Uterus (tissue), 4 donors: ENCODE measurements at regions of chr3 and their contacts with region 1.

Region 1: GRCh38 chr3:64030741-64031140 is 7.4 kb upstream of the PSMD6 start:
- DNase-seq: peak; percentile 77 to 79
- H3K4me3 ChIP-seq: peak overlapping the region in 1 of 2 donors; percentile 23
- H3K27ac ChIP-seq: peak overlapping the region; percentile 65 to 74
- H3K4me1 ChIP-seq: peaks cover 0 to 6% of the 10 kb centered on the region in 2 donors
- H3K27me3 ChIP-seq: no peaks in the 10 kb centered on the region
- CTCF ChIP-seq: peak; percentile 92 to 96 (median 94)
- POLR2A ChIP-seq: no peak

Region 2: DNA sequence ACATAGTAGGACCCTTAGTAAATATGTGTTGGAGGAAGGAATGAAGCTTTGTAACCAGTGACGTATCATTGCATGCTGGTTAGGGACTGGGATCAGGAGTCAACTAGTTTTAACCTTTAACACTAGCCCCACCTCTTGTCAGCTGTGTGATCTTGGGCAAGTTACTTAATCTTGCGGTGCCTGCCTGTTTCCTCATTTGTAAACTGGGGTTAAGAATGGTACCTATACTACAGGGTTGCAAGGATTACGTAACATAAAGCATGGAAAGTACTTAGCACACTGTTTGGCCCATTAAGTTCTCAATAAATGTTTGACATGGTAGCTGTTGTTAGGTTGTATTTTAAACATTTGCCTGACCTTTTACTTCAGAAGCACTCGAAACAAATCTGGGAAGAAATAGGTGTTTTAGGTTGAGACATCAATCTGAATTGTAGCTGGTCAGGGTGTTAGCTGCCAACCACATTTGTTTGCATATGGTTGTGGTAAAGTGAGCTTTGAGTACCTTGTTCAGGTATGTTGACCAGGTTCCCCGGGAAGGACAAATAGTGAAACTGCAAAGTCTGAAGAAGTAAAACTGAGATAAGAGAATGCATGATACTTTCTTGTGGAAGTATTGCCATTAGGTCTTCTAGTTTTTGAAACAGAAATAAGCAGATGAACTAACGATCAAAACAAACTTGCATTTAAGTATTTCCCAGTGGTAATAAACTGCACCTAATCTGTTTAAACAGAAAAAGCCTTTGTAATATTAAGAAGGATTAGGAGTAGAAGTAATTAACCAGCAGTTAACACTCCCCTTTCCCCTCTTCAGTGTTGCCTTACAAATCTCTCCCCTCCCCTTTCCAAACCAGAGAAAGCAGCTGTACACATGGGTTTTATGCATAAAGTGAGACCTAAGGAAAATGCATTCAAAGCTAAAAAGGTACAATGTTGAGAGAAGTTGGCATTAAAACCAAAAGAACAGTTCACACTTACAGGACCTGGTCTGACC is 92.8 kb before region 1 on chr3:
- intact Hi-C with region 1: no loop called
- DNase-seq: no peak
- H3K4me3 ChIP-seq: no peak overlapping the region
- H3K27ac ChIP-seq: no peak overlapping the region
- H3K4me1 ChIP-seq: no peaks in the 10 kb centered on the region
- H3K27me3 ChIP-seq: no peaks in the 10 kb centered on the region
- CTCF ChIP-seq: no peak
- POLR2A ChIP-seq: no peak

Region 3: DNA sequence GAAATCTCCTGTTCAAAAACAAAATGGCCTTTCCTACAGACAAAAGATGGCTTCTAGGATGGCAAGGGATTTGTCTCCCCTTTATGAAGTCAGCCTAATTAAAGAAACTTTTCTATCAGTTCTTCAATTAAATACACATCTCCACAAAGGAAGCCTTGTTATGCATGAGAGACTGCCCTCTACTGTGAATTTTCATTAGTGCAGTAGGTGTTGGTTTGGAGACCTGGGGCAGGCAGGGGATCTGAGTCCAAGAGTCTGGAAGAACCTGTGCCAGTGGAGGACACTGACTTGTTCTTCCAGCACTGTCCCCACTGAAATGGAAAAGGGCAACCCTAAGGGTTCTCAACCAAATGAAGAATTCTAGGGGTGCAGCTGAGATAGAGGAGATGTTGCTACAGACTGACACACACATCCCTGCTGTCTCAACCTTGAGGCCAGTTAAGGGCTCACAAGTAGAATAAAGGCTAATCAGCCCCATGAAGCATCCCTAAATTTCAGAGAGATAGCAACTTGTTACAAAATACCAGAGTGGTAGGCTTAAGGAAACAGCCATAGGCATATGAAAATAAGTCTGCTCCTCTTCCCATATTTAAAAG is 368.6 kb after region 1 on chr3:
- intact Hi-C with region 1: loop called (anchors 5 kb)
- DNase-seq: peak; percentile 28 to 37
- H3K4me3 ChIP-seq: no peak overlapping the region
- H3K27ac ChIP-seq: peak overlapping the region; percentile 66 to 76
- H3K4me1 ChIP-seq: peaks cover 8 to 13% of the 10 kb centered on the region in 2 donors
- H3K27me3 ChIP-seq: no peaks in the 10 kb centered on the region
- CTCF ChIP-seq: peak; percentile 67 to 83 (median 78)
- POLR2A ChIP-seq: no peak